Panc1 (cell line): ENCODE measurements at regions of chr15 and their contacts with region 1.

Region 1: DNA sequence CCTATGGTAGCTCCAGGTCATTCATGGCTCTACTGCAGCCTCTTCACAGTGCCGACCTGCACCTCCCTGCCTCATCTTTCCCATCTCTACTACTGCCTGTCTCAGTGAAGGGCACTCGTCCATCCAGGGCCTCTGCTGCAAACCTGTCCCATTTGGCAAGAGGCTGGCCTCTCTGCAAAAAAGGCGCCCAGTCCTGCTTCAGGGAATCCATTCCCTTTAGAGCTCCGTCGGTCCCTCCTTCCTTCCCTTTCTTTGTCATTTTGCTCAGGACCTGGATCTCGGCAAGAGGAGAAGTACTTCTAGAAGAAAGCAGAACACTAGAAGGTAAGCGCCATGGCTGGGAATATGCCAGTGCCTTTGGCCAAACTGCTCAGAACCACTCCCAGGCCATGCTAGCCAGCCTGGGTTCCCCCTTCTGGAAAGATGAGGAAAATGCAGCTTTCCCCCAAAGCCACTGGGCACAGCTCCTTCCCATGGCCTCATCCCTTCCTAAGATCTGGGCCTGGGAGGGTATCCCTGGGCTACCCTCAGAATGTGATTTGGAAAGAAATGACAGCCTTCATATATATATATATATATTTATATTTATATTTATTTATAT is 6.4 kb upstream of the ISL2 start:
- DNase-seq: no peak
- ATAC-seq: peak; percentile 85
- H3K4me3 ChIP-seq: no peak overlapping the region
- H3K27ac ChIP-seq: no peak overlapping the region
- H3K4me1 ChIP-seq: no peaks in the 10 kb centered on the region
- H3K27me3 ChIP-seq: no peaks in the 10 kb centered on the region
- CTCF ChIP-seq: peak; percentile 67

Region 2: GRCh38 chr15:74725845-74726773 is 1604.1 kb before region 1 on chr15:
- CTCF ChIA-PET with region 1: no interaction called
- POLR2A ChIA-PET with region 1: no interaction called
- in situ Hi-C with region 1: no loop called
- intact Hi-C with region 1: no loop called
- DNase-seq: no peak
- ATAC-seq: peak; percentile 84
- H3K4me3 ChIP-seq: peak overlapping the region; percentile 61 to 64
- H3K27ac ChIP-seq: no peak overlapping the region
- H3K4me1 ChIP-seq: no peaks in the 10 kb centered on the region
- H3K27me3 ChIP-seq: peaks cover 2% of the 10 kb centered on the region; the same call in 1 of the 2 replicates
- CTCF ChIP-seq: no peak; the same call in 1 of the 2 replicates

Region 3: GRCh38 chr15:76190834-76191538 is 139.2 kb before region 1 on chr15:
- CTCF ChIA-PET with region 1: interaction called, 3 read pairs
- POLR2A ChIA-PET with region 1: no interaction called
- in situ Hi-C with region 1: no loop called
- intact Hi-C with region 1: loop called (anchors 2 kb)
- DNase-seq: no peak
- ATAC-seq: peak; percentile 94
- H3K4me3 ChIP-seq: peak overlapping the region in 1 of 2 experiments; percentile 24; a peak in 2 of 4 replicates
- H3K27ac ChIP-seq: no peak overlapping the region
- H3K4me1 ChIP-seq: peaks cover 15% of the 10 kb centered on the region
- H3K27me3 ChIP-seq: no peaks in the 10 kb centered on the region
- CTCF ChIP-seq: peak; percentile 96

Region 4: DNA sequence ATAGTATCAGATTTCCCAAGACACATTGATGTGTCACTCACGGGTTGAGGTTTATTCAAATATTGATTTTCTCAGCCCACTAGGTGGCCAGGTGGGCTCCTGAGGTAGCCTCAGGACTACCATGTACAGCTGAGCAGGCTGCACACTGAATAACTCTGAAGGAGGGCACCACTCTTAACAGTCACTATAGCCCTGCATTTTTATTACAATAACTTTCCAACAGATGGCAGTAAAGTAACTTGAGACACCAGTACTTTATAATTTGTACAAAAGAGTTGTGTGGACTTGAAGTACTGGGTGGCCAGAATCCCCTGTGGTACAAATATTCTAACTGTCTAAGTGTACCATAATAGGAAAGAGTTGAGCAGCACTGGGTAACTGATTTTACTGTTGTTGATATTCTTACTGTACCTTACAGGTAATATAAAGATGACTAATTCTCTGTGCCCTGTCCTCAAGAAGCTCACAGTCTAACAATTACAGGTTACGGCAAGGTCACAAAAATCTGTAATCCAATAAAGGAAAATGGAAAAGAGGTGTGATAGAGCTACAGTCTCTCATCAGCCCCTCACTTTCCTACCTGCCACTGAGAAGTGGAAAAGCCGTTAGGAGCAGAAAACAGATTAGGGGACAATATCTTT is 94.9 kb before region 1 on chr15:
- CTCF ChIA-PET with region 1: interaction called, 19 read pairs
- POLR2A ChIA-PET with region 1: no interaction called
- in situ Hi-C with region 1: no loop called
- intact Hi-C with region 1: loop called (anchors 5 kb)
- DNase-seq: peak; percentile 17
- ATAC-seq: peak; percentile 96
- H3K4me3 ChIP-seq: no peak overlapping the region
- H3K27ac ChIP-seq: no peak overlapping the region
- H3K4me1 ChIP-seq: no peaks in the 10 kb centered on the region
- H3K27me3 ChIP-seq: no peaks in the 10 kb centered on the region
- CTCF ChIP-seq: peak; percentile 75

Region 5: GRCh38 chr15:76310475-76311099 is 19.6 kb before region 1 on chr15:
- CTCF ChIA-PET with region 1: interaction called, 11 read pairs
- POLR2A ChIA-PET with region 1: no interaction called
- in situ Hi-C with region 1: no loop called
- intact Hi-C with region 1: no loop called
- DNase-seq: no peak
- ATAC-seq: peak; percentile 20
- H3K4me3 ChIP-seq: peak overlapping the region; percentile 83 to 89
- H3K27ac ChIP-seq: peak overlapping the region; percentile 92
- H3K4me1 ChIP-seq: peaks cover 29% of the 10 kb centered on the region
- H3K27me3 ChIP-seq: no peaks in the 10 kb centered on the region
- CTCF ChIP-seq: no peak